ENCODE measurements at regions of chr16 and their contacts with region 1.

Region 1: GRCh38 chr16:13168091-13168572 is 266.7 kb downstream of the SHISA9 start:
- DNase-seq: no peak
- ATAC-seq: no peak

Region 2: DNA sequence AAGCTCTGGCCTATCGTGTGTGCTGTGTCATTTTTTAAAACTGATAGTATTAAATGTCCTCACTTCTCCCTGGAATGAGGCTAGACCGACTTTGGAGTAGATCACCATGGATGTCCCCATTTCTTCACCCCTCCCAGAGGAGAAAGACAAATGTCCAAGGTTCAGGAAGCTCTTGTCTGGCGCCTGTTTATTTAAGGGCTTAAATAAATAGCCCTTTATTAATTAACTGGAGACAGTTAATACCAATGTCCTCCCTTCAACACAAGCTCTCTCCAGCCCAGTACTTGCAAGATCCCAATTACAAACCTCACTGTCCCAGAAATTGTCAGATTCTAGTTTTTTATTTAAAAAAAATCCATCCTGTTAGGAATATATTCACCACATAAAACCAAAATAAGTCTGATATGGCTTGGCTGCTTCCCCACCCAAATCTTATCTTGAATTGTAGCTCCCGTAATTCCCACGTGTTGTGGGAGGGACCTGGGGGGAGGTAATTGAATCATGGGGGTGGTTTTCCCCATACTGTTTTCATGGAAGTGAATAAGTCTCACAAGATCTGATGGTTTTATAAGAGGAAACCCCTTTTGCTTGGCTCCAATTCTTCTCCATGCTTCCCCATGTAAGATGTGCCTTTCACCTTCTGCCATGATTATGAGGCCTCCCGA is 77.7 kb after region 1 on chr16:
- intact Hi-C with region 1: loop called (anchors 10 kb)
- DNase-seq: no peak
- ATAC-seq: no peak

Region 3: DNA sequence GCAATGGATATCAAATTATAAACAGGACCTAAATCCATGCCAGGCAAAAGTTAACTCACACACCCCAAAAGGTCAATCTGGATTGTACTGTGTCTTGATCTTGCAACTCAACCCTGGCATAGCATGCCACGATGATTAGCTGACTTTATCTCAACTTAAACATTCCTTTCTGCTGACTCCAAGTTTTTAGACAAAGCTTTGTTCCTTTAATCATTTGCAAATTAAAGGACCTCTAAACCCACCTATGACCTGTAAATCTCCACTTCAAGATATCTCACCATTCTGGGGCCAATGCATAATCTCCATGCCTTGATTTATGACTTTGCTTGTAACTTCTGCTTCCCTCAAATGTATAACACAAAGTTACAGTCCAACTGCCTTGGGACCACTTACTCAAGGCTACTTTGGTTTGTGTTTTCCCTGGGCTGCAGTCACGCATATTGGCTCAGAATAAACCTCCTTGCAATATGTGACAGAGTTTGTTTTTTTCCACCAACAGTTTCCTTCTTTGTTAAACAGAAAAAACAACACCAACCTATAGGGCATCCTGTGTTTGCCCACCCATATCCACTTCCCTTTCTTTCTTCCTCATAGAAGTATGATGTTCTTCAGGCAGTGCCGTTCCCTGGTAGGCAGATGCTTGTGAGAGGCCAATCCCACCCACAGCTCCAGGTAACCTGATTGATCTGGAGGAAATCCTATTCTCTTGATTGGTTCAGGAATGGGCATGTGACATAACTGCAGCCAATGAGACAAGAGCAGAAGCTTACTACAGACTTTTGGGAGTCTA is 361.3 kb after region 1 on chr16:
- intact Hi-C with region 1: no loop called
- DNase-seq: no peak
- ATAC-seq: no peak

Measured in Right ventricle myocardium superior (tissue), 1 donor.